Activated CD4-positive, alpha-beta T cell treated with anti-CD3 and anti-CD28 coated beads for 36 hours (primary cell): ENCODE measurements at regions of chr4 and their contacts with region 1.

Region 1: GRCh38 chr4:158172261-158173258 is at the start of gene GASK1B:
- DNase-seq: peak; percentile 30
- ATAC-seq: peak; percentile 36
- H3K4me3 Mint-ChIP-seq: no peak within 1 kb of the TSS
- H3K27ac Mint-ChIP-seq: no peak within 1 kb of the TSS
- H3K4me1 Mint-ChIP-seq: peaks cover 6% of the 10 kb centered on the region
- H3K27me3 Mint-ChIP-seq: peaks cover 27% of the 10 kb centered on the region
- total RNA-seq, gene GASK1B: not detected

Region 2: DNA sequence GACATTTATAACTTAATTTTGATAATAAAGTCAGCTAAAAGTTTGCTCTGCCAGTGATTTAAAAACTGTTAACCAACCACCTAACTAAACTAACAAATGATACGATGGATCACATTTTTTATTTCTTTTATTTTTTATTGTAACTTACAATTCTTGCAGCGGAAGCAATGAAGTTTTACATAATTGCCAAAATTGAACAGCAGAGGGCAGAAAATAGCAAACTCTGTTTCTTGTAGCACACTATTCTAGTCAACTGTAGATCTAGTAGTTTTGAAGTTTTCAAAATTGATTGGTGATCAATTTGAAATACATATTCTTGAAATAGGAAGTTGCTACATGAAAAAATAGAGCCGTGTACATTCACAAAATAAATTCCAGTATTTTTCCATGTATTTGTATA is 954.9 kb before region 1 on chr4:
- CTCF ChIA-PET with region 1: no interaction called
- POLR2A ChIA-PET with region 1: no interaction called
- intact Hi-C with region 1: loop called in 1 of 2 experiments (anchors 10 kb)
- DNase-seq: no peak
- ATAC-seq: no peak
- H3K4me3 Mint-ChIP-seq: no peak overlapping the region
- H3K27ac Mint-ChIP-seq: no peak overlapping the region
- H3K4me1 Mint-ChIP-seq: no peaks in the 10 kb centered on the region
- H3K27me3 Mint-ChIP-seq: peaks cover 21% of the 10 kb centered on the region

Region 3: DNA sequence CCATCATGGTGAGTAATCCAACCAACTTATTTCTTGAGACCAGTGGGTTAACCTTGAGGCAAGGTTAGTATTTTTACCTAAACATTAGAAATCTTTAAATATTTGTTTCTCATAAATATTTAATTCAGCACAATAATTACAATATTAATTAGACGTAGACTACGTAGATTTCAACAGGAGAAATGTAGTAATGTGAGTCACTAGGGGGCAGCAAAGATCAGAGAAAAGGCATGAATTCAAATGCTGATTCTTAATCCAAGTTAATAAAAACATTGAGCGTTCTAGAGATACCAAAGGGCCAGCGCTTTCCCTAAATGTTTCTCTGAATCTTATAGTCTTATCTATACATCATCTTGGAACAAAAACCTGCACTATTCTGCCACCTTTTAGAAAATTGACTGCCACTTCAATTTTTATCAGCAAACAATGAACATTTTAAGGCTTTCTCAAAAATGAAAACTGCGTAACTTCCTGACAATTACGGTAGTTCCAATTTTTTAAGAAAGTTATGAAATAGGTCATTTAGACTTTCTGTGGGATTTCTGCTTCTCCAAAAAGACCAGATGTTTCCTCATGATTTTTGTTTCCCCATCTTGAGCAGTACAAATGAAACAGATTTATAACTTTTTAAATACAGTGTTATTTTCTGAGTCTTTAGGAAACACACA is 180.4 kb before region 1 on chr4:
- CTCF ChIA-PET with region 1: interaction called, 7 read pairs
- POLR2A ChIA-PET with region 1: no interaction called
- intact Hi-C with region 1: loop called (anchors 1 kb)
- DNase-seq: peak; percentile 26
- ATAC-seq: no peak
- H3K4me3 Mint-ChIP-seq: no peak overlapping the region
- H3K27ac Mint-ChIP-seq: no peak overlapping the region
- H3K4me1 Mint-ChIP-seq: no peaks in the 10 kb centered on the region
- H3K27me3 Mint-ChIP-seq: no peaks in the 10 kb centered on the region

Region 4: DNA sequence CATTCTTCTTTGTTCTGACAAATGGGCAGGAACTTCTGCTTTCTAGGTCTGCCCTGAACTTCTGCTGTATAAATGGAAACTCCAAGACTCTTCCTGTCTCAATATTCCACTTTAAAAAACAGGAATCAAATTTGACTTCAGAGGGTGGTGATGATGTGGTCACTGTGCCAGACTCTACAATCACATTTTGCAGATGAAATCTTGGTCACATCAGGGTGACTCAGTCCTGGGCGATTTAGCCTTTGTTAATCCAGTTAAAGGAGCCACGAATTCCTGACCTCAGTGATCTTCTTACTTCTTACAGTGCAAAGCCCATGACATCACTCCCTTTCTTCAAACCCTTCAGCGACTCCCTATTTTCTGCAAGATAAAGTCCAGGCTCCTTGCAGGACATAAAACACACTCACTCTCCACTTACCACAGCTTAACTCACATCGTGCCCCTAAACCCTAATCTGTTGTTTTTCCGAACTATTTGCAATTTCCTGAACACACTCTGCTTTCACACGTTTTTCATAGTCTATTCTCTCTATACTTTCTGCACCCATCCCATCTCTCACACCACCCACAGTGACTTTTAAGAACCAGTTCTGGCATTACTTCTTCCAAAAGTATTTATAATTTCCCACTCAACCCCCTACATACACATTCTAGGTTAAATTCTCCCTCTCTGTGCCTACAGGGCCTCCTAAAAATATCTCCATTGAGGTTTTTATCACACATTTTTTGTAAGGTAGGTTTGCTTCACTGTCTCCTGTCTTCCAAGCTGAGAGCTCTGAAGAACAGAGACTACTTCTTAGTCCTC is 10.8 kb before region 1 on chr4:
- CTCF ChIA-PET with region 1: interaction called, 10 read pairs
- POLR2A ChIA-PET with region 1: no interaction called
- intact Hi-C with region 1: no loop called
- DNase-seq: no peak
- ATAC-seq: no peak
- H3K4me3 Mint-ChIP-seq: no peak overlapping the region
- H3K27ac Mint-ChIP-seq: no peak overlapping the region
- H3K4me1 Mint-ChIP-seq: no peaks in the 10 kb centered on the region
- H3K27me3 Mint-ChIP-seq: peaks cover 7% of the 10 kb centered on the region

Region 5: GRCh38 chr4:158314756-158315487 is 142.4 kb after region 1 on chr4:
- CTCF ChIA-PET with region 1: no interaction called
- POLR2A ChIA-PET with region 1: no interaction called
- intact Hi-C with region 1: no loop called
- DNase-seq: no peak
- ATAC-seq: no peak
- H3K4me3 Mint-ChIP-seq: no peak overlapping the region
- H3K27ac Mint-ChIP-seq: no peak overlapping the region
- H3K4me1 Mint-ChIP-seq: no peaks in the 10 kb centered on the region
- H3K27me3 Mint-ChIP-seq: peaks cover 4% of the 10 kb centered on the region